Gastrocnemius medialis (tissue), 4 donors: ENCODE measurements at regions of chr3 and their contacts with region 1.

Region 1: GRCh38 chr3:197002701-197003454 is 26.7 kb downstream of the MELTF start:
- DNase-seq: peak; percentile 32 to 49
- ATAC-seq: peak; percentile 89 to 92
- H3K4me3 ChIP-seq: peak overlapping the region; percentile 47 to 79 (median 57)
- H3K27ac ChIP-seq: peak overlapping the region; percentile 29 to 64 (median 52)
- H3K4me1 ChIP-seq: peaks cover 3 to 10% of the 10 kb centered on the region in 2 donors
- H3K27me3 ChIP-seq: no peaks in the 10 kb centered on the region
- CTCF ChIP-seq: peak; percentile 58 to 93 (median 86)
- POLR2A ChIP-seq: no peak

Region 2: GRCh38 chr3:196789759-196790419 is 213.0 kb before region 1 on chr3:
- in situ Hi-C with region 1: no loop called
- intact Hi-C with region 1: no loop called
- DNase-seq: no peak
- ATAC-seq: no peak
- H3K4me3 ChIP-seq: no peak overlapping the region
- H3K27ac ChIP-seq: peak overlapping the region in 1 of 4 donors; percentile 11
- H3K4me1 ChIP-seq: peaks cover 27 to 38% of the 10 kb centered on the region in 2 donors
- H3K27me3 ChIP-seq: no peaks in the 10 kb centered on the region
- CTCF ChIP-seq: no peak
- POLR2A ChIP-seq: no peak

Region 3: DNA sequence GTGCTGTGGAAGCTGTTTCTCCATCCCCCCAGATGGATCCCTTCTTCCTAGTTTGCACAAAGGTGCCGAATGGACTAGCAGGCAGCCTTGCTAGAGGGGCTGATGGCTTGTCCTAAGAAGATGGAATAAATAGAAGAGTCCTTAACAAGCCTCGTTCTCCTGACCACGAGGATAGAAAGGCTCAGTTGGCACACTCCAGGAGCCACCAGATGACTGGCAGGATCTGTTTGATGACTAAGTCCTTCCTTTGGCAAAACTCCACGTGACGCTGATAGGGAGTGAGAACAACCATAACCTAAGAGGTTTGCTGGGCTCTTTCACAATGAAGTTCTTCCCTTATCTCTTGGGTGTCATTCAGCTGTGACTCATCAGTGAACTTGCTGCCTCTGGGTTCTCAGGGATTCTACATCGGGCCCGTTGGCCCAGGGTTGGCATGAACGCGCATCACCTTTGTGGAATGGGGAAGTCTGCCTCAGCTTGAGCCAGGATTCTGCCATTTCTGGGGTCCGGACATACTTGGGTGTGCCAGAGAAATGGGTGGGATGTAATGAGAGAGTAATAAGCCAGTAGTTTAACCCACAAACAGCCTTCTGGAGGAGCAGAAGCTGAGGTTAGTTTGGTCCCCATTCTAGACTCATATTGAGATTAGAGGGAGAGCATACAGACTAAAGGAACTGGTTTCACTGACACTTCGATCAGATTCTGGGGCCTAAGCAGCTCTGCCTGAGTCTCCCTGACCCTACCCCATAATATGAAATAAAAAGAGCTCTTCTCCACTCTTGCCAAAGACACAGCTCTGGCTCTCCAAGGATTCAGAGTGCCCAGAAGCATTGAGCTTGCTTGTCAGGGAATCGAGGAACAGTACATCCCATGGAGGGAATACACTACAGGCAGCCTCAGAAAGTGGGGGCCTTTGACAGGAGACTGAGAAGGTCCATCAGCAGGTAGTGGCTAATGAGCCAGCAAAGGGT is 28.7 kb after region 1 on chr3:
- in situ Hi-C with region 1: no loop called
- intact Hi-C with region 1: loop called (anchors 1 kb)
- DNase-seq: peak; percentile 75 to 80
- ATAC-seq: peak; percentile 88 to 89
- H3K4me3 ChIP-seq: no peak overlapping the region
- H3K27ac ChIP-seq: peak overlapping the region; percentile 17 to 47 (median 30)
- H3K4me1 ChIP-seq: peaks cover 6 to 8% of the 10 kb centered on the region in 2 donors
- H3K27me3 ChIP-seq: peaks cover 28 to 37% (median 31%) of the 10 kb centered on the region in 3 donors
- CTCF ChIP-seq: no peak
- POLR2A ChIP-seq: no peak

Region 4: GRCh38 chr3:197186887-197187588 is 184.2 kb after region 1 on chr3:
- in situ Hi-C with region 1: loop called in 3 of 4 experiments (anchors 25 kb)
- intact Hi-C with region 1: loop called (anchors 1 kb)
- DNase-seq: no peak
- ATAC-seq: peak; percentile 53 to 59
- H3K4me3 ChIP-seq: no peak overlapping the region
- H3K27ac ChIP-seq: no peak overlapping the region
- H3K4me1 ChIP-seq: peaks cover 18 to 23% of the 10 kb centered on the region in 2 donors
- H3K27me3 ChIP-seq: no peaks in the 10 kb centered on the region
- CTCF ChIP-seq: peak; percentile 48 to 80 (median 75)
- POLR2A ChIP-seq: no peak

Region 5: DNA sequence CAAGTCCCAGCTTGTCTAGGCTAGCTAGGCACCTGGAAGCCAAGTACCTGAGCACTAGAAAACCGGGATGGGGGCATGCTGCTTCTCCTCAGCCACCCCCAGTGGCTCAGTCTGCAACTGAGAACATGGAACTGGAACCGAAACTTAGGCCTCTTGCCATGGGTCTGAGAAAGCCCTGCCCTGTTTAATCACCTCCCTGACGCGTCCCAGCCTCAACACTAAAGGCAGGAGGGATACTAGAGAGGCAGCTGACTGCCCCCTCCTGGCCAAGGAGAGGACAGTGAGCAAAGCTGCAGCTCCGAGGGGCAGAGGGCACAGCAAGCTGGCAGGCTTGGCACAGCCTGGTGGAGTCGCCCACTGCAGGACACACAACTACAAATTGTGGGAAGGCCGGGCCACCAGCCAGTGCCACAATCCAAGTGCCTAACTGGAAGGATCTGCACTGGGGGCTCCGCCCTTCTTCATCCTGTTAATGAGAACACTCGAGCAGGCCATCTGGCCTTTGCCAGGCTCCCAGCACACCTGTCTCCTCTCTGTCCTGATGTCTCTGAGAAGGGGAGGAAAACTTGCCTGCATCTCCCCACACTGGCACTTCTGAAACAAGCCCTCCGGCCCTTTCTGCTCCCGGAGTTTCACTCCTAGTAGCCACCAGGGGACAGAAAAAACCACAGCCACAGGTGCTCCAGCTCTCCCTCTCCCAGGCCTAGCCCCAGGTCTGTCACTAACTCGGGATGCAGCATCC is 499.2 kb after region 1 on chr3:
- in situ Hi-C with region 1: loop called (anchors 25 kb)
- intact Hi-C with region 1: no loop called
- DNase-seq: no peak
- ATAC-seq: no peak
- H3K4me3 ChIP-seq: no peak overlapping the region
- H3K27ac ChIP-seq: no peak overlapping the region
- H3K4me1 ChIP-seq: no peaks in the 10 kb centered on the region
- H3K27me3 ChIP-seq: no peaks in the 10 kb centered on the region
- CTCF ChIP-seq: peak in 2 of 5 experiments; percentile 26 to 29
- POLR2A ChIP-seq: no peak

Region 6: DNA sequence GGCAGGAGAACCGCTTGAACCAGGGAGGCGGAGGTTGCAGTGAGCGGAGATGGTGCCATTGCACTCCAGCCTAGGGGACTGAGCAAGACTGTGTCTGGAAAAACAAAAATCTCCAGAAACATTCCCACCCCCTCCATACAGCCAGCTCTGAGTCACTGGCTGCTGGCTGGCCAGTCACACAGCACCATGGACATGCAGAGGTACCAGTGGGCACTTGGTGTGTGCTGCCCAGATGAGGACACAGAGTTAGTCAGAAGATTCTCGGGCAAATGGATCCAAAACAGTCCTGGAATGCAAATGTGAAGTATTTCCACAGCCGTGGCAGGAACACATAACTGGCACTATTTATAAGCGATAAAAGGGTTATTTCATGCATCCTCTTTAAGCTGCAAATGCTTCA is 508.3 kb after region 1 on chr3:
- in situ Hi-C with region 1: loop called (anchors 25 kb)
- intact Hi-C with region 1: loop called (anchors 2 kb)
- DNase-seq: no peak
- ATAC-seq: no peak
- H3K4me3 ChIP-seq: no peak overlapping the region
- H3K27ac ChIP-seq: no peak overlapping the region
- H3K4me1 ChIP-seq: peaks cover 0 to 1% of the 10 kb centered on the region in 2 donors
- H3K27me3 ChIP-seq: peaks cover 0 to 9% (median 0%) of the 10 kb centered on the region in 3 donors
- CTCF ChIP-seq: no peak
- POLR2A ChIP-seq: no peak